ENCODE measurements at regions of chr20 and their contacts with region 1.

Region 1: DNA sequence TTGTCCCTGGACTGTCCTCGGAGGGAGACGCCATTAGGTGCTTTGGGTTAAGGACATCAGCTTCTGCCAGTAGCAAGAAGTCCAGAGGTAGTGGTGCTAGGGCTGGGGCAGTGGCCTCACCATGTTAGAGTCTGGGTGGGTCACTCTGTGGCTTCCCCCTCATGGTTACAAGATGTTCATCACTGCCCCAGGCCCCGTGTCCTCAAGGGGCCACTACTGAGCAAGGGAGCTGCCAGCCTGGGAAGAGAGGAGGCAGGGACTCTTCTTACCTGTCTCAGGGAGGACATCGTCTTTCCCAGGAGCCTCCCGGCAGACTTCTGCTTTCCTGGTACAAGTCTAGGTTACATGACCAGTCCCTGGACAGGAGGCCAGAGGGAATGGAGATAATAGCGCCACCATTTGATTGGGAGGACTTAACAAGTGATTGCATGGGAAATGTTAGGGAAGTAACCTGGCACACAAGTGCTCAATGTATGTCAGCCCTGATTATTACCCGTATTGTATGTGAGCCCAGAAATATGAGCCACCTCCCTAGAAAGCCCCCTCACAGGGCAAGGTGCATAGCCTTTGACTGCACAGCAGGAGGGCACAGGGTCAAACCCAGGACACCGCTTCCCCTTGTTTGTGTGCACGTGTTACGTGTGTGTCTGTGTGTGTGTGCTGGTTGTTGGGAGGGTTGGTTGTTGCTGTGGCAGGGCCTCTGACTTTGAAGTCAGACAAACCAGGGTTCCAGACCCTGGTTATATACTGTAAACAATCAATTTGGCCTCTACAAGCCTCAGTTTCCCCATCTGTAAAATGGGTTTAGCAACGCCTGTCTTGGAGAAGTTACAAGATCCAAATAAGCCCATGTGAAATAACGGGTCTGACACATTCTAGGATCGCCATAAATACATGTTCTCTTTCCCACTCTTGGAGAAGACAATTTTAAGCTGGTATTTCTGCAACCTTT is 30.0 kb downstream of the SIRPA start:
- DNase-seq: no peak
- H3K4me3 ChIP-seq: no peak overlapping the region
- H3K27ac ChIP-seq: no peak overlapping the region
- H3K4me1 ChIP-seq: no peaks in the 10 kb centered on the region
- H3K27me3 ChIP-seq: no peaks in the 10 kb centered on the region
- CTCF ChIP-seq: no peak

Region 2: GRCh38 chr20:1734269-1734858 is 190.8 kb before region 1 on chr20:
- intact Hi-C with region 1: no loop called
- DNase-seq: no peak
- H3K4me3 ChIP-seq: no peak overlapping the region
- H3K27ac ChIP-seq: no peak overlapping the region
- H3K4me1 ChIP-seq: no peaks in the 10 kb centered on the region
- H3K27me3 ChIP-seq: no peaks in the 10 kb centered on the region
- CTCF ChIP-seq: no peak

Region 3: DNA sequence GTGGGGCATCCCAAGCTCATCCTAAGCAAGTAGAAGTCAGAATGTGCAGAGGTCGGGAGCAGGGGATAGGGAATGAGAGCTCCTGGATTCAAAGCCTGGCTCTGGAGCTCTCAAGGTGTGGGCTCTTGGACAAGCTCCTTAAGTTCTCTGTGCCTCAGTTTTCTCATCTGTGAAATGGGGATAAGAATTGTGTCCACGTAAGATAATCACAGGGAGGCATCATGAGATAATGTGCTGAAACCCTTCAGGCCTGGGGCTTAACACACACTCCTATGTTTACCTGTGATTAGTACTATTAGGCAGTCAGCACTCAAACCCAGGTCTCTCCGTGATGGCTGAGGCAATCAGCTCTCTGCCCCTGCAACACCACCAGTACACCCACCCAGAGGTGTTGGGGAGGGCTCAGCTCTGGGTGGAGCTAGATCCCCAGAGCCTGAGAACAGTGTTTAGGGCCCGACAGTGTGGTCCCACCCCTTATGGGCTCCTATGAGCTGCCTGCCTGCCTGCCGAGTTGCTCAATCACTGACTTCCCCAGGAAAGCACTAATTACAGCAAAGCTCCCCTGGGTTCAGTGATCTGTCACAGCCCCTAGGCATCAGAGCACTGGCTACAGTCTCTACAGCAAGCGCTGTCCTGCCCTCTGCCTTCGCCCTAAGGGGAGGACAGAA is 36.3 kb before region 1 on chr20:
- intact Hi-C with region 1: loop called (anchors 5 kb)
- DNase-seq: peak in 1 of 2 donors; percentile 42
- H3K4me3 ChIP-seq: no peak overlapping the region
- H3K27ac ChIP-seq: no peak overlapping the region
- H3K4me1 ChIP-seq: peaks cover 0 to 48% (median 25%) of the 10 kb centered on the region in 4 donors
- H3K27me3 ChIP-seq: peaks cover 0 to 13% of the 10 kb centered on the region in 2 donors
- CTCF ChIP-seq: no peak

Measured in tibial artery (tissue), 4 donors.